Sigmoid colon (tissue), 7 donors: ENCODE measurements at regions of chr13 and their contacts with region 1.

Region 1: DNA sequence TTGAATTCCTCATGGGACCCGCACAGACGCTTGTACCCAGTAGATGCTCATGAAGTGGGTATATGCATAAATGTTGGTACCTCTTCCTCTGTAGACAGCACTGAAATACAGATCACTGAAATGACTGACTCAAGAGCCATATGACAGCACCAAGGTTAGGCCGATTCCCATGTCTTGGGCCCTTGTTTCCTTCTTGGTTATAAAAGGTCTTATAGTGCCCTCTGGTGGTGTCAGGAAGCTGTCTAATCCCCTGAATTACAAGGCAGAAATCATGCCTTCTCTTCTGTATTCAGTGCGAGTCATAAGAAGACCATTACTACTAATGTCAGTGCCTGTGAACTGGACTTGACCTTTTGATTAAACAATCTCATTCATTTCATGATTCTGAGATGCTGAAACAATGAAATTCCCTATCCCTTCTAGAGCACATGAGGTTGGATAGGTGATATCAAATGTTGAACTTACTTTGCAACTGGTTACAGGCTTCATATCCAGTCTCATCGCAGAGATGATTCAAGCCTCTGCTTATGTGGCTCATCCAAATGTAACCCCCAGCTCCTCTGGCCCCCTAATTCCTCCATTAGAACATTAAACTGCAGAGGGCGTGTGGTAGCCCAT is 59.7 kb downstream of the SPATA13 start:
- DNase-seq: no peak
- H3K4me3 ChIP-seq: no peak overlapping the region
- H3K27ac ChIP-seq: peak overlapping the region in 2 of 4 donors; percentile 41 to 49
- H3K4me1 ChIP-seq: peaks cover 0 to 33% (median 24%) of the 10 kb centered on the region in 4 donors
- H3K27me3 ChIP-seq: no peaks in the 10 kb centered on the region
- CTCF ChIP-seq: peak; percentile 56 to 89 (median 73)
- EP300 ChIP-seq: no peak
- POLR2A ChIP-seq: no peak

Region 2: DNA sequence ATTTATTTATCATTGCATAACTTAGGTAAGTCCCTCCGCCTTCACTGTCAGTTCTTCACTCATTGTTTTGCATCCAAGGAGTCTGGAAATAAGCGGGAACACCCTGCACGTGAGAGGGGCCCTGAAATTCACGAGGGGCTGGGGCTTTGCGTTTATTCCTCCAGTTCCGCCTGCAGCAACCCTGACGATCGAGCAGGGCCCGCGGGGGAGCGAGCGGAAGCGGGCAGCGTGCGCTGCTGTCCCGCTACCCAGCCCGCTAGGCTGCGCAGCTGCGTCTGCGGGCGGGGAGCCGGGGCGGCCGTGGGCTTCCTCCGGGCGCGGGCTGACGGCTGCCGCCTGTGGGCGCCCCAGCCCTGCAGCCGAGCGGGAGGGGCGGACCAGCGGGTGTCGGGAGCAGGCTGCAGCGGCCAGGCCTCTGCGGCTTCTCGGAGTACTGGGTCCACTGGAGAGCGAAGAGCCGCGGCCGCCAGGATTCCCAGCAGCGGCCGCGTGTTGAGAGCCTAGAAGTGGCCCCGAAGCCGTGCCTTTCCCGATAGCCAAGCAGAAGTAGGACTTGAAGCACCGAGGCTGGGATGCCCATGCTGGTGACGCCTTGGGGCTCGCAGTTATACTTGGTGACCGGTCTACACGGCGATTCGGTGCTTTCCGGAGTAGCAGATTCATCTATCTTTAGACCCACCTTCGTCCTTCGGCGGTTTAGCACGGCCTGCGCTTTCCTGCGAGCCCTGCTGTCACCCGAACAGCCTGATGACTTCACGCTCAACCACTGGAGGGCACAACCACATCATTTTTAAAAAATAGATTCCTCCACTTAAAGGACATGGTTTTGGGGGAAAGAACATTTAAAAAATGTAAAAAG is 753.8 kb before region 1 on chr13:
- intact Hi-C with region 1: loop called (anchors 5 kb)
- DNase-seq: peak; percentile 82
- H3K4me3 ChIP-seq: peak overlapping the region; percentile 28 to 57 (median 50)
- H3K27ac ChIP-seq: peak overlapping the region; percentile 77 to 86 (median 84)
- H3K4me1 ChIP-seq: peaks cover 0 to 18% (median 9%) of the 10 kb centered on the region in 4 donors
- H3K27me3 ChIP-seq: no peaks in the 10 kb centered on the region
- CTCF ChIP-seq: peak; percentile 54 to 75 (median 62)
- EP300 ChIP-seq: no peak
- POLR2A ChIP-seq: no peak

Region 3: DNA sequence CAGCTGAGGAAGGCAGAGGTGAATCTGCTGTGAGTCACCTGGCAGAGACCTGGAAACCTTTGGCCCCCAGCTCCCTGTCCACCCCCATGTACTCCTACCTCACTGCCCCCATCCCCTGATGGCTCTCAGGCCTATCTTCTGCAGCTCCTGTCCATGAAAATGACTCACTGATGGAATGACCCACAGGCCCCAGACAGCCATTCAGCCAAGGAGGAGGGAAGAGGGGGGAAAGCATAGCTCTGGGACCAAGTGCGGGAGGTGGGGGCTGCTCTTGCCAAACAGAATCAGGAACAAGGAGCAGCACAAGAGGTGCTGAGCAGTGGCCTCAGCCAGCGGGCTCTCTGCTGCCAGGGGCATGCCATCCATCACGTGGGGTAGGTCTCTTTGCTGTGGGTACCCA is 211.5 kb before region 1 on chr13:
- intact Hi-C with region 1: no loop called
- DNase-seq: no peak
- H3K4me3 ChIP-seq: no peak overlapping the region
- H3K27ac ChIP-seq: no peak overlapping the region
- H3K4me1 ChIP-seq: peaks cover 0 to 7% (median 6%) of the 10 kb centered on the region in 4 donors
- H3K27me3 ChIP-seq: no peaks in the 10 kb centered on the region
- CTCF ChIP-seq: no peak
- EP300 ChIP-seq: no peak
- POLR2A ChIP-seq: no peak

Region 4: GRCh38 chr13:24020375-24020830 is 199.8 kb before region 1 on chr13:
- intact Hi-C with region 1: loop called (anchors 1 kb)
- DNase-seq: no peak
- H3K4me3 ChIP-seq: no peak overlapping the region
- H3K27ac ChIP-seq: no peak overlapping the region
- H3K4me1 ChIP-seq: peaks cover 0 to 9% (median 3%) of the 10 kb centered on the region in 4 donors
- H3K27me3 ChIP-seq: no peaks in the 10 kb centered on the region
- CTCF ChIP-seq: peak; percentile 71 to 83 (median 75)
- EP300 ChIP-seq: no peak
- POLR2A ChIP-seq: no peak

Region 5: GRCh38 chr13:24038841-24039330 is 181.3 kb before region 1 on chr13:
- intact Hi-C with region 1: loop called (anchors 5 kb)
- DNase-seq: no peak
- H3K4me3 ChIP-seq: no peak overlapping the region
- H3K27ac ChIP-seq: peak overlapping the region; percentile 18 to 61 (median 48)
- H3K4me1 ChIP-seq: peaks cover 0 to 38% (median 27%) of the 10 kb centered on the region in 4 donors
- H3K27me3 ChIP-seq: no peaks in the 10 kb centered on the region
- CTCF ChIP-seq: no peak
- EP300 ChIP-seq: no peak
- POLR2A ChIP-seq: no peak

Region 6: DNA sequence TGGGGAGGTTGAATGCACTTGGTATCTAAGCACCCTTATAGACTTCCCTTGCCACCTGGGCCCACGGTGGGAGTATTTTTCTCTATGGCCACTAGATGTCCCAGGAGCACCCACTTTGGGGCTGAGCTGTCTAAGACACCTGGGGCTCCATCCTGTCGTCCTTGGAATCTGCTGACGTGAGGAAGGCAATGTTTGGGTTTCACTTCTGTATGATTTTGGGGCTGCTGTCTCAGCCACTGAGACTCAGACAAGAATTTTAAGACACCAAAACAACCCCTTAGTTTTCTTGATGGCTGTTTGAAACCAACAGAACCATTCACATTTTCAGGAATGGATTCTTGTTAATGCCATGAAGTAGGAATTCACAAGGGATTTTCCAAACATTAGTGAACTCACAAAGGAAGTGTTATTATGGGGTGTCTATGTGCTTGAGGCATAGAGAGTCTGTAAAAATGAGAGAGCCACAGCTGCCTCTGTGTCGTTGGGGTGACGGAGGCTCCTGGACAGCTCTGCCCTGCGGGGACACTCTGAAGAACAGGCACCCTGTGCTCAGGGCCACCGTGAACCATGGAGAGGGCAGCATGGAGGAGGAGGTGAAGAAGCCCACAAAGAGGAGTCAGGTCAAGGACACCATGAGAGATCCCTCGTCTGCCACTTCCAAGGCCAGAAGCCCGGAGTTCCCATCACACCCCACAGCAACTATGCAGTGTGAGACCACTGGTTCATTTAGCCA is 166.5 kb before region 1 on chr13:
- intact Hi-C with region 1: no loop called
- DNase-seq: no peak
- H3K4me3 ChIP-seq: no peak overlapping the region
- H3K27ac ChIP-seq: peak overlapping the region; percentile 50 to 75 (median 68)
- H3K4me1 ChIP-seq: peaks cover 0 to 42% (median 35%) of the 10 kb centered on the region in 4 donors
- H3K27me3 ChIP-seq: no peaks in the 10 kb centered on the region
- CTCF ChIP-seq: peak; percentile 10 to 68 (median 59)
- EP300 ChIP-seq: no peak
- POLR2A ChIP-seq: no peak

Region 7: DNA sequence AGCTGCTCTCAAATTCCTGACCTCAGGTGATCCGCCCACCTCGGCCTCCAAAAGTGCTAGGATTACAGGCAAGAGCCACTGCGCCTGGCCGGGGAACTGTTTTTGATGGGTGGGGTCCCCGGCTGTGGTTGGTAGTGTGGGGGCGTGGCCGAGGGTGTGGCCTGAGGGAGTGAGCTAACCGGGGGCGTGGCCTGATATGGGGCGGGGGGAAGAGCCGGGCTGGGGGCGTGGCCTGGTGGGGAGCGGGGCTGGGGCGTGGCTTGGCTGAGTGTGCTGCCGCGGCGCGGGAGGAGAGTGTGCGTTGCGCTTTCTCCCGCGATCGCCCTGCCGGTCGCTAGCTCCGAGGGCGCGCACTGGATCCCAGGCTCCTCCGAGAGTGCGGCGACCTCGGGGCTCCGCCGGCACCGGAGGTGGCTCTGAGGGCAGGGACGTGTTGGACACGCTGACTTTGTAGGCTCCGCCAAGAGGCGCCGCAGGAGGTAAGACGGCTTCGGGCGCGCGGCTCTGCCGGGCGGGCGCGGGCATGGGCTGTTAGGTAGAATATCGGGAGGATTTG is 59.7 kb before region 1 on chr13 and contains the start of gene SPATA13:
- intact Hi-C with region 1: loop called (anchors 5 kb)
- DNase-seq: peak; percentile 96
- H3K4me3 ChIP-seq: peak within 1 kb of the TSS; percentile 66 to 94 (median 80)
- H3K27ac ChIP-seq: peak within 1 kb of the TSS; percentile 70 to 79 (median 73)
- H3K4me1 ChIP-seq: peaks cover 0 to 37% (median 29%) of the 10 kb centered on the region in 4 donors
- H3K27me3 ChIP-seq: no peaks in the 10 kb centered on the region
- CTCF ChIP-seq: no peak
- EP300 ChIP-seq: no peak
- POLR2A ChIP-seq: peak; percentile 16 to 50
- total RNA-seq, gene SPATA13: 16.1 to 29.4 (median 21.7) TPM

Region 8: DNA sequence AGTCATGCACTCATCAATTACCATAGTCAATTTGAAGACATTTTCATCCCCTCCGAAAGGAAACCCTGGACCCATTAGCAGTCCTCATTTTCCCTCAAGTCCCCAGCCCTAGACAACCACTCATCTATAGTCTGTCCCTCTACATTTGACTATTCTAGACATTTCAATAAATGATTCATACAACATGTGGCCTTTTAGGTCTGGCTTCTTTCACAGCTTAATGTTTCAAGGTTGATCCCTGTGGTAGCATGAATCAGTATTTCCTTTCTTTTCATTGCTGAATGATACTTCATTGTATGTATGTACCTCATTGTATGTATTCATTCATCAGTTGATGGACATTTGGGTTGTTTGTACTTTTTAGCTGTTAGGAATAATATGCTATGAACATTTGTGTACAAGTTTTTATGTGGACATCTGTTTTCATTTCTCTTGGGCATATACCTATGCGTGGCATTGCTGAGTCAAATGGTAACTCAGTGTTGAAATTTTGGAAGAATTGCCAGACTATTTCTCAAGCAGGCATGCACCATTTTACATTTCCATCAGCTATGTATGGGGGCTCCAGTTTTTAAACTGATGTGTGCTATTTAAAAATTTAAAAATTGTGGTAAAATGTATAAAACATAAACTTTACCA is 41.2 kb before region 1 on chr13:
- intact Hi-C with region 1: no loop called
- DNase-seq: no peak
- H3K4me3 ChIP-seq: no peak overlapping the region
- H3K27ac ChIP-seq: no peak overlapping the region
- H3K4me1 ChIP-seq: peaks cover 0 to 16% (median 5%) of the 10 kb centered on the region in 4 donors
- H3K27me3 ChIP-seq: no peaks in the 10 kb centered on the region
- CTCF ChIP-seq: no peak
- EP300 ChIP-seq: no peak
- POLR2A ChIP-seq: no peak

Region 9: GRCh38 chr13:24288870-24289269 is 68.7 kb after region 1 on chr13:
- intact Hi-C with region 1: no loop called
- DNase-seq: no peak
- H3K4me3 ChIP-seq: no peak overlapping the region
- H3K27ac ChIP-seq: peak overlapping the region in 1 of 4 donors; percentile 18
- H3K4me1 ChIP-seq: no peaks in the 10 kb centered on the region
- H3K27me3 ChIP-seq: no peaks in the 10 kb centered on the region
- CTCF ChIP-seq: no peak
- EP300 ChIP-seq: no peak
- POLR2A ChIP-seq: no peak